T-cell (primary cell): ENCODE measurements at regions of chr10 and their contacts with region 1.

Region 1: DNA sequence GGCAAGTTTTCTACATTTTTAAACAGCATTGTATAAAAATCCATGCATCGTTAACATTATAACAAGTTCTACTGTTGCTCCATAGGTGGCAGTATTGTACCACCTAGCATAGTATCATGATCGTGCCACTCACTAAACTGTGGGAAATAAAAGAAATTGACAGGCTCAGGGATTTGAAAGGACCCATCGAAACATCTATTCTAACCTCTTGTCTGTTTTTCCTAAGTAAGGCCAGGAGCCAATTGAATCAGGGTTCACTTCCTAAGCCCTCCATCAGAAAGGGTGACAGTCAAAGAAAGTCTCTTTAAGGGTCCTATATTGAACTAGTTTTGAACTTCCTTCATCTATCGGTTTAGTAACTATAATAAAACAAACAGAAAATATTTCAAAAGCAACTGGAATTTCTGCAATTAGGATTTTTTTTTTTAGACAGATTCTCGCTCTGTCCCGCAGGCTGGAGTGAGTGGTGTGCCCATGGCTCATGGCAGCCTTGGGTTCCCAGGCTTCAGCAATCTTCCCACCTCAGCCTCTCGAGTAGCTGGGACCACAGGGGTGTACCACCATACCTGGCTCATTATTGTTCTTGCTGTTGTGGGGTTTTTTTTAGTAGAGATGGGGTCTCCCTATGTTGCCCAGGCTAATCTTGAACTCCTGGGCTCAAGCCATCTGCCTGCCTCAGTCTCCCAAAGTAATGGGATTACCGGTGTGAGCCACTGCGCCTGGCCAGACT is 9.4 kb downstream of the HACD1 start:
- DNase-seq: peak in 8 of 35 experiments; percentile 11 to 77 (median 22)
- ATAC-seq: peak; percentile 72 to 82 (median 74)
- H3K4me3 ChIP-seq: no peak overlapping the region
- H3K4me3 Mint-ChIP-seq: no peak overlapping the region
- H3K27ac ChIP-seq: no peak overlapping the region
- H3K27ac Mint-ChIP-seq: no peak overlapping the region
- H3K4me1 ChIP-seq: no peaks in the 10 kb centered on the region
- H3K4me1 Mint-ChIP-seq: peaks cover 0 to 4% (median 0%) of the 10 kb centered on the region in 3 donors
- H3K27me3 ChIP-seq: no peaks in the 10 kb centered on the region
- H3K27me3 Mint-ChIP-seq: no peaks in the 10 kb centered on the region

Region 2: DNA sequence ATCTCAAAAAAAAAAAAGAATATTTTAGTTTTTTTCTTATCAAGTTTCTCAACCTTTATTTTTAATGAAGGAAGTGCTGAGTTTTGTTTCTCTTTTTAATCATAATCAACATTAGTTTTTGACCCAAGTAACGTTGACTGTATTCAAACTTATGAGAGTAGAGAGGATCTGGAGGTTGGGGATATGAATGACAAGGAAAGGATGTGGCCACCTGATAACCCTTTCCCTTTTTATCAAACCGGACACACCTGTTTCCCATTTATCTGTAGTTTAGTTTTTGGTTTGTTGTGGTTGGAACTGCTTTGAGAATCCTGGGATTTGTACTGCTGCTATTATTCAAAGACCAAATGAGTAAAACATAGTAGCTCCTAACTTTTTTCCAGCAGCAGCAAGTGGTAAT is 29.2 kb before region 1 on chr10:
- CTCF ChIA-PET with region 1: no interaction called
- POLR2A ChIA-PET with region 1: no interaction called
- DNase-seq: no peak
- ATAC-seq: no peak
- H3K4me3 ChIP-seq: no peak overlapping the region
- H3K4me3 Mint-ChIP-seq: no peak overlapping the region
- H3K27ac ChIP-seq: no peak overlapping the region
- H3K27ac Mint-ChIP-seq: no peak overlapping the region
- H3K4me1 ChIP-seq: no peaks in the 10 kb centered on the region
- H3K4me1 Mint-ChIP-seq: no peaks in the 10 kb centered on the region
- H3K27me3 ChIP-seq: peaks cover 0 to 2% of the 10 kb centered on the region in 2 experiments
- H3K27me3 Mint-ChIP-seq: peaks cover 0 to 4% of the 10 kb centered on the region in 2 donors

Region 3: GRCh38 chr10:17643755-17644484 is 36.2 kb after region 1 on chr10 and contains the start of gene STAM:
- CTCF ChIA-PET with region 1: no interaction called
- POLR2A ChIA-PET with region 1: interaction called, 3 to 10 read pairs
- DNase-seq: peak; percentile 85 to 95 (median 92)
- ATAC-seq: peak; percentile 92
- H3K4me3 ChIP-seq: peak within 1 kb of the TSS; percentile 93 to 97
- H3K4me3 Mint-ChIP-seq: peak within 1 kb of the TSS; percentile 94 to 99 (median 99)
- H3K27ac ChIP-seq: peak within 1 kb of the TSS; percentile 99
- H3K27ac Mint-ChIP-seq: peak within 1 kb of the TSS; percentile 100
- H3K4me1 ChIP-seq: peaks cover 27 to 28% of the 10 kb centered on the region in 2 experiments
- H3K4me1 Mint-ChIP-seq: peaks cover 49 to 59% (median 55%) of the 10 kb centered on the region in 3 donors
- H3K27me3 ChIP-seq: no peaks in the 10 kb centered on the region
- H3K27me3 Mint-ChIP-seq: no peaks in the 10 kb centered on the region
- total RNA-seq, gene STAM: 18.6 to 42.7 (median 25.7) TPM

Region 4: DNA sequence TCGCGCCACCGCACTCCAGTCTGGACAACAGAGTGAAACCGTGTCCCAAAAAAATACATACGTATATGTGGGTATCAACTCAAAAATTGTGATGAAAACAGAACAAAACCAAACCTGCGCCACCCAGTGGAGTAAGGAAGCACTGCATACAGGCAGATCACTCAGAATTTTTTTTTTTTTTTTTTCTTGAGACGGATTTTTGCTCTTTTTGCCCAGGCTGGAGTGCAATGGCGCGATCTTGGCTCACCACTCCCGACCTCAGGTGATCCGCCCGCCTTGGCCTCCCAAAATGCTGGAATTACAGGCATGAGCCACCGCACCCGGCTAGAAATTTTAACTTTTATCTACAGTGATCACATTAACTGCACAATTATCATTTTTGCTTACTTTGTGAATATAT is 135.2 kb after region 1 on chr10:
- CTCF ChIA-PET with region 1: interaction called, 7 to 17 read pairs
- POLR2A ChIA-PET with region 1: no interaction called
- DNase-seq: peak; percentile 20 to 75 (median 60)
- ATAC-seq: peak in 3 of 4 experiments; percentile 33 to 44 (median 35)
- H3K4me3 ChIP-seq: no peak overlapping the region
- H3K4me3 Mint-ChIP-seq: no peak overlapping the region
- H3K27ac ChIP-seq: no peak overlapping the region
- H3K27ac Mint-ChIP-seq: no peak overlapping the region
- H3K4me1 ChIP-seq: peaks cover 3 to 5% of the 10 kb centered on the region in 2 experiments
- H3K4me1 Mint-ChIP-seq: peaks cover 3 to 8% (median 5%) of the 10 kb centered on the region in 3 donors
- H3K27me3 ChIP-seq: peaks cover 0 to 2% of the 10 kb centered on the region in 2 experiments
- H3K27me3 Mint-ChIP-seq: no peaks in the 10 kb centered on the region